PC-9 (cell line): ENCODE measurements at regions of chr9 and their contacts with region 1.

Region 1: GRCh38 chr9:108272349-108272899 is 583.4 kb downstream of the ACTL7B start:
- DNase-seq: peak; percentile 54 to 72
- H3K4me3 ChIP-seq: peak overlapping the region; percentile 47; the same call in 1 of the 2 replicates
- H3K27ac ChIP-seq: peak overlapping the region; percentile 96
- H3K4me1 ChIP-seq: peaks cover 43% of the 10 kb centered on the region
- H3K27me3 ChIP-seq: no peaks in the 10 kb centered on the region
- CTCF ChIP-seq: peak; percentile 71

Region 2: DNA sequence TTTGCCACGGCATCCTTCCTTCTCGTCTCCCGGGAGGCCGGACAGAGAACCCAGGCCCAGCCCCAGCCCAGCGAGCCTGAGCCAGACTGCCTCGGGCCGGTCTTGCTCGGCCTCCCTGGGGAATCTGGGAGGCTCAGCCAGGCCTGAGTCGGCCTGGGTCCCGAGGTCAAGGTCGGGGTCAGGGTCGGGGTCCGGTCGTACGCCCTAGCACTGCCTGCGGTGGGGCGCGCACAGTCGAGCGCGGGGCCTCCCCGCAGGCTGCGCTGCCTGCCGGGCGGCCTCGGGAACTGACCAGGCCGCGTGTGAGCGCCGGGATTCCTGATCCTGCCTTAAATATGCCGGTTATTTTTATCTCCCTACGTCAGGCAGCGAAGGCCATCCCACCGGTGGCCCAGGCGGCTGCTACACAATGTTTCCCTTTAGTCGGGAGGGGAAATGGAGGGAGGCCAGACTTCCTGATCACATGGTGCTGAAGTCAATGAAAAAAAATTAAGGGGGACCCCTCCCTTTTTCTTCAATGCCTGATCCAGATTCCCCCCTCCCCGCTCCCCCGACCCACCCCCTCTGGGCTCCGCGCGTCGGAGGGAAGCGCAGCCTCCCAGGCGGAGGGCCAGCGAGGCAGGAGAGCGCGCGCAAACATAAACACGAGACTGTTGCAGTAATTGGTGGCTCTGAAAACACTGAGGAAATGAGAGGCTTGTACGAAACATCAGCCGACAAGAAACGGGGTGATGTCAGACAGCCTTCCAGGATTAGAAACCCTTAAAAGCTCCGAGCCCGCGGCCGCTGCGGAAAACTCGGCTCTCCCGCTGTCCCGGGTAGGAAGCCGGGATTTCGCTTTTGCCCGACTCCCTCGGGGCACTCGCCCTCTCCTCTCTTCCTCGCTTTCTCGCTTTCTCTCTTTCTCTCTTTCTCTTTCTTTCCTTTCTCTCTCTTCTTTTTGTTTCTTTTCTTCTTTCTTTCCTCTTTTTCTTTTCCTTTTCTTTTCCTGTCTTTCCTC is 634.7 kb before region 1 on chr9:
- CTCF ChIA-PET with region 1: no interaction called
- POLR2A ChIA-PET with region 1: no interaction called
- intact Hi-C with region 1: loop called (anchors 2 kb)
- DNase-seq: peak in 1 of 2 experiments; percentile 44
- H3K4me3 ChIP-seq: no peak overlapping the region
- H3K27ac ChIP-seq: no peak overlapping the region
- H3K4me1 ChIP-seq: no peaks in the 10 kb centered on the region
- H3K27me3 ChIP-seq: no peaks in the 10 kb centered on the region
- CTCF ChIP-seq: no peak

Region 3: DNA sequence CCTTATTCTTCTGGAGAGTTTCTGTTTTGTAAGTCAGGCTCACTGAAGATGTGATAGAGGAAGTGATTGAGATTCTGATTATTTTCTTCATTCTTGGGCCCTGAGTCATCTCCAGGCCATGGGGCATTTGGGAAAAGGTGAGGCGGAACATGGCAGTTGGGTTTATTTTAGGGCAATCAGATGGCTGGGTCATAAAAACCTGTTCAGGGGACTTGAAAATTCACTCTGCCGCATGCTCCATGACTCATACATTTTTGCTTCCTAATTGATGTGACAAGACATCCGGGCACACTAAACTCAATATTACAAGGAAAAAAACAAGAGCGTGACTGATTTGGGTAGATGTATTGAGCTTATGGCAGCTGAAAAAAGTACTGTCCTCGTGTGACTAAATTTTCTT is 517.1 kb before region 1 on chr9:
- CTCF ChIA-PET with region 1: no interaction called
- POLR2A ChIA-PET with region 1: interaction called, 6 read pairs
- intact Hi-C with region 1: loop called (anchors 1 kb)
- DNase-seq: peak; percentile 85 to 99
- H3K4me3 ChIP-seq: 0 out of 2 replicates have a peak overlapping the region, but pooled peaks have one; percentile 20
- H3K27ac ChIP-seq: peak overlapping the region; percentile 99
- H3K4me1 ChIP-seq: peaks cover 60% of the 10 kb centered on the region
- H3K27me3 ChIP-seq: no peaks in the 10 kb centered on the region
- CTCF ChIP-seq: no peak

Region 4: DNA sequence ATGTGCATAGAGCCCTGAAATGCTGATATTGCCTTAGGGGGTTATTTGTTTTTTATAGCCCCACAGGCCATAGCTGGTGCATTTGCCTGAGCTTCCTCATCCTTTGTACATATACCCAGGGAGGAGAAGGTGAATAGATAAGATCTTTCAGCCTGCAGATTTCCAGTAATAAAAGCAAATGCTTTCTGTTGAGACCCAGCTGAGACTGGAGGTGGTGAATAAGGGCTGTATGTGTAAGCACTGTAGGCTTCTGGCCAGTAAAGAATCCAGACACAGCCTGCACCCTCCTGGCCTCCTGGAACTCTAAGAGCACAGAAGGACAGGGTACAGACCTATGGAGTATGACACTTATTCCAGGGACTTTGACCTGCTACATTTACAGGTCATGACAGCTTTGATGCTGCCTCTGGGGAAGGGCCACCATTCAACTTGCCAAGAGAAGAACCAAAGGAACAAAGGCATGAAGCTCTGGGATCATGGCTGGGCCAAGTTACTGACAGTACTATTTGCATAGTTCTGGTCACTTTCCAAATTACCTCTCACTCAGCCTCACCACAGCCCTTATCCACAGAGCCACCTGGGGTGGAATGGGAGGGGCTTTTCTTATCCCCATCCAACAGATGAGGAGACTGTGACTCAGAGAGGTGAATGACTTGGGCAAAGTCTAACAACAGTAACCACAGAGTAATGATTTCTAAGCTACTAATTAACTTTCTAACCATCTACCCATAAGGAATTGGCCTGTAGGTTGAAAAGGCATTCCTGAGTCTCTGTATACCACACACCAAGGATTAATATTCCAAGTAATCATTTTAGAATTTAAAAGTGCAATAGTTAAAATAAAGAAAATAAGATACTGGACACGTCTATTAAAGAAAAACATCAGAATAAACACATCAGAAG is 178.4 kb before region 1 on chr9:
- CTCF ChIA-PET with region 1: interaction called, 4 read pairs
- POLR2A ChIA-PET with region 1: no interaction called
- intact Hi-C with region 1: loop called (anchors 1 kb)
- DNase-seq: peak; percentile 60 to 79
- H3K4me3 ChIP-seq: no peak overlapping the region
- H3K27ac ChIP-seq: peak overlapping the region; percentile 85
- H3K4me1 ChIP-seq: peaks cover 30% of the 10 kb centered on the region
- H3K27me3 ChIP-seq: no peaks in the 10 kb centered on the region
- CTCF ChIP-seq: no peak

Region 5: DNA sequence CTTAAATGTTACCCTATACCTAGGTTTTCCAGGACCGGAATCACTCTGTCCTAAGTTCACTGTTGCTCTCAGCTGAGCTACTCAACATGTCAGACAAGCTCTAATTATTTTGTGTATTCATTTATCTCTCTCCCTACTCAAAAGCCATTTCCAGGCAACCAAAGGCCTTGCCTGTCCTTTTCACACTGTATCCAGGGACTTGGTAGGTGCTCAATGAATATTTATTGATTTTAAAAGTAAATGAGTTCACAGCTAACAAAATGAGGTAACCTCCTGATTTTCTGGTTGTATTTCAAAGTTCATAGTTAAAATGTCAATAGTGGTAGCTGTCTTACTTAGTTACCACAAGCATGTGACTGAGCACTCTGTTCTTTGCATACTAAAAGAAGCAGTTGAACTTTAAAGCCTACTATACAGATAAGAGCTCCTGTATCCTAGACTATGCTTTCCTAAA is 61.1 kb after region 1 on chr9:
- CTCF ChIA-PET with region 1: no interaction called
- POLR2A ChIA-PET with region 1: no interaction called
- intact Hi-C with region 1: no loop called
- DNase-seq: no peak
- H3K4me3 ChIP-seq: no peak overlapping the region
- H3K27ac ChIP-seq: no peak overlapping the region
- H3K4me1 ChIP-seq: no peaks in the 10 kb centered on the region
- H3K27me3 ChIP-seq: no peaks in the 10 kb centered on the region
- CTCF ChIP-seq: no peak

Region 6: DNA sequence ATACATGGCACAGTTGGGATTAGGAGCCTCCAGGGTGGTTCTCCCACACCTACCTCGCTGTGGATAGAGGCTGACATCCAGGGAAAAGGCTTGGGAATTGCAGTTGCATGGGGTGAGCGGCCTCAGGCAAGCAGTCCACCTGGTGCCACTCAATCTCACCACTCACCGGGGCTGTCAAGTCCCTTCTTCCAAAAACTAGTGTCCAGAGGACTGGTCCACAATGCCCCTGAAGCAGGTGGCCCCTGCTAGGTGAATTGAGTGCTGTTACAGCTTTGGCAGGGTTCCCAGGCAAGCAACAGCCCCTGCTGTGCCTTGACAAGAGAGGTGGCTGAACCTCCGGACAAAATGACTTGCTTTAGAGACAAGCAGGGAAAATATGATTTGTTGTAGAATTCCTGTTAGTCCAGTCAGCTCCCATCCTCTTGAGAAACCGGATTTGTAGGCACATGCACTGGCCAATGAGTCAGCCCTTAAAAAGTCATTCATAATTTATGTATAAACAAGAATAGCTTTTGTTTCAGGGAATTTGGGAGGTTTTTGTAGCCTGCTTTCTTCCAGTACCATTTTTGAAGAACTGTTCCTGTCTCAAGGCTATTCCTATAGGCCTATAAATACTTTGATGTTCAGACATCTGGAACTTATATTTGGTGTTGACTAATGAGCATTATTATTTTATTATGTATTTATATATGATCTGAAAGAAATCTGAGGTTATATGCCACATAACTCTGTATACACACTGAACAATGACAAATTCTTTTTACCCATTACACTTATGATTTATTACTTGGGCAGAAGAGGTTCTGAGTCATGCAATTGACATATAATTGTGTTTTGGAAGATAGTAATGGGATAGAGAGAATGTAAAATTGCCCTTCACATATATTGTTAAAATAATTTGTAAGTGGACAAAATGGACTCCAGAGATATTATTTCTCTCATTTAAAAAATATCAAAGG is 172.3 kb after region 1 on chr9:
- CTCF ChIA-PET with region 1: interaction called, 3 read pairs
- POLR2A ChIA-PET with region 1: interaction called, 5 read pairs
- intact Hi-C with region 1: loop called (anchors 5 kb)
- DNase-seq: peak; percentile 71 to 95
- H3K4me3 ChIP-seq: peak overlapping the region; percentile 34; the same call in 1 of the 2 replicates
- H3K27ac ChIP-seq: peak overlapping the region; percentile 80
- H3K4me1 ChIP-seq: peaks cover 45% of the 10 kb centered on the region
- H3K27me3 ChIP-seq: no peaks in the 10 kb centered on the region
- CTCF ChIP-seq: no peak

Region 7: DNA sequence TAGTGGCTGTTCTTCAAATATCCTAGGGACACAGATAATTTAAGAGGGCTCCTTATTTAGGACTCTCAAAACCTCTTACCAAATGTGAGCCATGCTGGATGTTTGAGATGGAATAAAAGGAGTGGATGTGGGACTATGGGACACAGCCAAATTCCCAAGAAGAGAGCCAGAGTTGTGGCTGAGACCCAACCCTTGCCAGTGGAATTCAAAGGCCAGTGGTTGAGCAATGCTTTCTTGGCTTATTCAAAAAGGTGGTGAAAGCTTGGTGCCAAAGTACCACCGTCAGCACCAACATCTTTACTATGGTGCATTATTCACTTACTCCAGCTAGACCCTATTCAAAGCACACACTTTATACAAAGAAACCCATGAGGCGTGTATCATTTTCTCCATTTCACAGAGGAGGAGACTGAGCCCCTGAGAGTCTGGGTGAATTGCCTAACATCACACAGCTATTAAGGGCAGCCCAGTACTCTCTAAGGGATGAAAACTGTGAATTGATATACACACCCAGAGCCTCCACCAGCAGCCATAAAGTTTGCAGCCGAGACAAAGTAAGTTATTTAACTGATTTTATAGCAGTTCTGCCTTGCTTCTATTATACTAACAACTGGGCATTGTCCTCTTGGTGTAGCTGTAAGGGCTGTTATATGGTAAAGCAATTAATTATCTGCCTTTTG is 191.6 kb after region 1 on chr9:
- CTCF ChIA-PET with region 1: no interaction called
- POLR2A ChIA-PET with region 1: no interaction called
- intact Hi-C with region 1: no loop called
- DNase-seq: no peak
- H3K4me3 ChIP-seq: no peak overlapping the region
- H3K27ac ChIP-seq: no peak overlapping the region
- H3K4me1 ChIP-seq: peaks cover under 1% of the 10 kb centered on the region; the same call in 1 of the 2 replicates
- H3K27me3 ChIP-seq: no peaks in the 10 kb centered on the region
- CTCF ChIP-seq: no peak

Region 8: DNA sequence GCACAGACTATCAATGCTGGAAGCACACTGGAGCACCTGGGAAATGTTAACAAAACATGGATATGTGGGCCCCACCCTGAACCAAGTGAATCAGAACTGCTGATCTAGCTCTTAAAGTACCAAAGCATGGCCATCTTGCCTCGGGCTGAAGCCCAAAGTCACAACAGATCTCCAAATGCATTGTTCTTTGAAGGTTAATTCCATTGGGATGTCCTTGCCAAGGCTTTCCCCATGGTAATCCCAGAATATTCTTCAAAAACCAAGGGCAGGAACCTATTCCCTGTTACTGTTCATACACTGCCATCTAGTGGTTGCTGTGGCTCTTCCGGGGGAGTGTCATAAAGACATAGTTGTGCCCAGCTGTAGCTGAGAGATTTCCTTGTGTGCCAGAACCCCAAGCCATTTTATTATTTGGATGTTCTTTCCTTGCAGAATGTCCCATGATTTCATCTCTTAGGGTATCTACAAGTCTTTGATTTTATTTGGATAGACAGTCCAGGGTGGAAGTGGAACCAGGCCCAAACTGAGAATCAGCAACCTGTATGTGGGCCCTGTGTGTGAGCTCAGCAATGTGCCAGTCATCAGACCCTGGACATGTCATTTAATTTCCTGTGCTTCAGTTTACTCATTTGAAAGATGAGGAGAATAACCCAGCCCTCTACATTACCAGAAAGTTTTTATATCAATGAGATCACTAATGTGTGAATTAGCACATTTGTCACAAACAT is 293.4 kb after region 1 on chr9:
- CTCF ChIA-PET with region 1: interaction called, 6 read pairs
- POLR2A ChIA-PET with region 1: no interaction called
- intact Hi-C with region 1: loop called (anchors 1 kb)
- DNase-seq: peak; percentile 62 to 77
- H3K4me3 ChIP-seq: no peak overlapping the region
- H3K27ac ChIP-seq: no peak overlapping the region
- H3K4me1 ChIP-seq: no peaks in the 10 kb centered on the region
- H3K27me3 ChIP-seq: no peaks in the 10 kb centered on the region
- CTCF ChIP-seq: peak; percentile 92